ENCODE measurements at regions of chr12 and their contacts with region 1.

Region 1: GRCh38 chr12:104108755-104109445 is 29.1 kb downstream of the NFYB start:
- DNase-seq: peak; percentile 55
- ATAC-seq: peak; percentile 98
- H3K4me3 ChIP-seq: no peak overlapping the region
- H3K27ac ChIP-seq: no peak overlapping the region
- H3K4me1 ChIP-seq: no peaks in the 10 kb centered on the region
- H3K27me3 ChIP-seq: no peaks in the 10 kb centered on the region
- CTCF ChIP-seq: peak; percentile 85 to 93 (median 86); a peak in 5 of 6 replicates
- EP300 ChIP-seq: no peak
- POLR2A ChIP-seq: no peak
- RAD21 ChIP-seq: peak; percentile 93

Region 2: GRCh38 chr12:103877934-103878510 is 230.9 kb before region 1 on chr12:
- CTCF ChIA-PET with region 1: interaction called, 239 read pairs
- POLR2A ChIA-PET with region 1: no interaction called
- RAD21 ChIA-PET with region 1: interaction called, 98 read pairs
- SMC1A ChIA-PET with region 1: interaction called, 75 read pairs
- in situ Hi-C with region 1: loop called (anchors 5 kb)
- intact Hi-C with region 1: loop called (anchors 1 kb)
- DNase-seq: peak; percentile 49
- ATAC-seq: peak; percentile 66
- H3K4me3 ChIP-seq: no peak overlapping the region
- H3K27ac ChIP-seq: no peak overlapping the region
- H3K4me1 ChIP-seq: peaks cover 31% of the 10 kb centered on the region
- H3K27me3 ChIP-seq: no peaks in the 10 kb centered on the region
- CTCF ChIP-seq: peak; percentile 74 to 79 (median 77)
- EP300 ChIP-seq: no peak
- POLR2A ChIP-seq: no peak
- RAD21 ChIP-seq: peak; percentile 92

Region 3: GRCh38 chr12:103936679-103937078 is 172.2 kb before region 1 on chr12:
- CTCF ChIA-PET with region 1: interaction called, 18 read pairs
- POLR2A ChIA-PET with region 1: no interaction called
- RAD21 ChIA-PET with region 1: interaction called, 3 read pairs
- SMC1A ChIA-PET with region 1: interaction called, 12 read pairs
- in situ Hi-C with region 1: no loop called
- intact Hi-C with region 1: no loop called
- DNase-seq: no peak
- ATAC-seq: peak; percentile 10
- H3K4me3 ChIP-seq: peak overlapping the region; percentile 39; the same call in 1 of the 2 replicates
- H3K27ac ChIP-seq: no peak overlapping the region
- H3K4me1 ChIP-seq: peaks cover 7% of the 10 kb centered on the region; the same call in 1 of the 2 replicates
- H3K27me3 ChIP-seq: no peaks in the 10 kb centered on the region
- CTCF ChIP-seq: no peak
- EP300 ChIP-seq: no peak
- POLR2A ChIP-seq: no peak
- RAD21 ChIP-seq: no peak

Region 4: GRCh38 chr12:103997286-103997900 is 111.5 kb before region 1 on chr12:
- CTCF ChIA-PET with region 1: interaction called, 11 read pairs
- POLR2A ChIA-PET with region 1: no interaction called
- RAD21 ChIA-PET with region 1: interaction called, 4 read pairs
- SMC1A ChIA-PET with region 1: interaction called, 4 read pairs
- in situ Hi-C with region 1: no loop called
- intact Hi-C with region 1: loop called (anchors 10 kb)
- DNase-seq: no peak
- ATAC-seq: no peak
- H3K4me3 ChIP-seq: no peak overlapping the region
- H3K27ac ChIP-seq: no peak overlapping the region
- H3K4me1 ChIP-seq: no peaks in the 10 kb centered on the region
- H3K27me3 ChIP-seq: no peaks in the 10 kb centered on the region
- CTCF ChIP-seq: no peak
- EP300 ChIP-seq: no peak
- POLR2A ChIP-seq: no peak
- RAD21 ChIP-seq: no peak

Region 5: DNA sequence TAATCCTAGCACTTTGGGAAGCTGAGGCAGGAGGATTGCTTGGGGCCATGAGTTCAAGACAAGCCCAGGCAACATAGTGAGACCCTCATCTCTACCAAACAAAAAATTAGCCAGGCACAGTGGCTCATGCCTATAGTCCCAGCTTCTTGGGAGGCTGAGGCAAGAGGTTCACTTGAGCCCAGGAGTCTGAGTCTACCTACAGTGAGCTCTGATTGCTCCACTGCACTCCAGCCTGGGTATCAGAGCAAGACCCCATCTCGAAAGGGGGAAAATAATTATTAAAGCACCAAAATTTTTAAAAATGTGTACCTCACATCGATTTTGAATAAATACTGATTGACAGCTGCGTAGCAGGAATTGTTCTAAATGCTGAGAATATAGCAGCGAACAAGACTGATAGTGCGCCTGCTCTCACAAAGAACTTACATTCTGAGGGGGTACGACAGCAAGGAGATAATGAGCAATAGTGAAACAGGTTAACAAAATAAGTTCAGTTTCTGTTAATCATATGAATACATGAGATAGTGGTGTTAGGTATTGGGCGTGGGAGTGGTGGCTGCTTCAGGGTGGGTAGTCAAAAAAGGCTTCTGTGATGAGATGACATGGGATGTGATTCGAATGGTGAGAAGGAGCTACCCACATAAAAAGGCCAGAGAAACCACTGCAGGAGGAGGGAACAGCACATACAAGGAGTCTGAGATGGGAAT is 25.0 kb before region 1 on chr12:
- CTCF ChIA-PET with region 1: interaction called, 20 read pairs
- POLR2A ChIA-PET with region 1: interaction called, 3 read pairs
- RAD21 ChIA-PET with region 1: interaction called, 9 read pairs
- SMC1A ChIA-PET with region 1: interaction called, 5 read pairs
- in situ Hi-C with region 1: no loop called
- intact Hi-C with region 1: no loop called
- DNase-seq: peak; percentile 36
- ATAC-seq: peak; percentile 93
- H3K4me3 ChIP-seq: no peak overlapping the region
- H3K27ac ChIP-seq: no peak overlapping the region
- H3K4me1 ChIP-seq: peaks cover 2% of the 10 kb centered on the region; the same call in 1 of the 2 replicates
- H3K27me3 ChIP-seq: no peaks in the 10 kb centered on the region
- CTCF ChIP-seq: no peak
- EP300 ChIP-seq: peak in 1 of 2 experiments; percentile 33; a peak in 1 of 4 replicates
- POLR2A ChIP-seq: no peak
- RAD21 ChIP-seq: no peak

Region 6: DNA sequence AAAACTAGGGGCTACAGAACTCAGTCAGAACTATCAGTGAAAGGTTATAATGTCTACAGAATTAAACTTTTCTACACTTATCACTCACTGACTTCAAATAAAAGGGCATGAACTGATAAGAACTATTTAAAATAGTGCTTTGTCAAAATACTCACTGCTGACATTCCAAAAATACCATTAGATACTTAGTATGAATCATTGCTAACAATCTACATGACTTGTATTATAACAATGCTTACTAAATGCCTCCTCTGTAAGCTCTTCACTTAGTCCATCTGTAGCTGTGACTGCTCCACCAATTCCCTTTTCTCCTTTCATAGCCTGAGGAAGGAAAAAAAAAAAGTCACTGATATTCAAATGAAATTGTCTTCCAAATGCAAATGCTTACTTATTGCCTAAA is 12.1 kb after region 1 on chr12:
- CTCF ChIA-PET with region 1: interaction called, 35 read pairs
- POLR2A ChIA-PET with region 1: interaction called, 4 read pairs
- RAD21 ChIA-PET with region 1: interaction called, 6 read pairs
- SMC1A ChIA-PET with region 1: interaction called, 15 read pairs
- in situ Hi-C with region 1: no loop called
- intact Hi-C with region 1: no loop called
- DNase-seq: no peak
- ATAC-seq: no peak
- H3K4me3 ChIP-seq: no peak overlapping the region
- H3K27ac ChIP-seq: no peak overlapping the region
- H3K4me1 ChIP-seq: no peaks in the 10 kb centered on the region
- H3K27me3 ChIP-seq: no peaks in the 10 kb centered on the region
- CTCF ChIP-seq: no peak
- EP300 ChIP-seq: no peak
- POLR2A ChIP-seq: no peak
- RAD21 ChIP-seq: no peak

Measured in GM12878 (cell line).